ENCODE measurements at regions of chr12 and their contacts with region 1.

Region 1: GRCh38 chr12:110245369-110245772 is 35.7 kb upstream of the ATP2A2 start:
- DNase-seq: peak; percentile 83
- ATAC-seq: peak; percentile 36

Region 2: GRCh38 chr12:110109037-110109836 is 136.1 kb before region 1 on chr12:
- intact Hi-C with region 1: loop called (anchors 5 kb)
- DNase-seq: peak; percentile 78
- ATAC-seq: peak; percentile 88